Heart right ventricle (tissue), 16 donors: ENCODE measurements at regions of chr6 and their contacts with region 1.

Region 1: DNA sequence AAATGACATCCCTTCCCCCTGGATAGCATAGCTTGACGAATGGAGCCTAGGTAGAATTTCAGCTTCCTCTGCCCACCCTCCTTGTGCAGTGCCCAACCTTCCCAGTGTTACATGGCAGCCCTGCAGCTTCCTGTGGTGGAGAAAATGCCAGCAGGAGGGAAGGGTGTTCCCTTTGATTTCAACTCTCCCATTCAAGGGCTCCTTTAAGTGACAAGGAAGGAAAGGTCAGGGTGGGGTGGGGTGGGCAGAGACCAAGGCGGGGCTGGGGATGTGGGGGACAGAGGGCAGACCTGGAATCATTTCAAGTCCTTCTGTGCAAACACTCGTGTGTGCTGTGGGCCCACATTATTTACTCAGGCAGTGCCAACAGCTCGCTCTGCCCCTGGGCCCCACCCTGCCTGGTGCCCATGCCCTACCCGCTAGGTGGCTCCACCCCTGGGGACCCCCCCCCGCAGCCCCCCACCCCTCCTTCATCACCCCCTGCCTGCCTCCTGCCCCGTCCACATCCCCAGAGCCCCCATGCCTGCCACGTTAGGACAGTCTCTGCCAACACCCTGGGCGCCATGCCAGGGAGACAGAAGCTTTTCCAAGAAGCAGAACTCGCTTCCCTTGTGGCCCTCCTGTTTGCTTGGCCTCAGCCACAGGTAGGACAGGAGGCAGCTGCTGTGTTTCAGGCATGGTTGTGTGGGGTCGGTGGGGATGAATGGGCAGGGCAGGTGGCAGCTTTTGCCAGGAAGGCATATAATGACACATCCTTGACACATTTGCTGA is 9.4 kb downstream of the SPDEF start:
- DNase-seq: peak; percentile 21 to 66
- ATAC-seq: peak in 7 of 8 donors; percentile 26 to 62 (median 41)
- H3K4me3 ChIP-seq: no peak overlapping the region
- H3K27ac ChIP-seq: peak overlapping the region in 5 of 10 donors; percentile 1 to 39 (median 22)
- H3K4me1 ChIP-seq: peaks cover 0 to 19% (median 10%) of the 10 kb centered on the region in 9 donors
- H3K27me3 ChIP-seq: no peaks in the 10 kb centered on the region
- CTCF ChIP-seq: no peak

Region 2: GRCh38 chr6:34260576-34261267 is 286.0 kb before region 1 on chr6:
- intact Hi-C with region 1: no loop called
- DNase-seq: no peak
- ATAC-seq: no peak
- H3K4me3 ChIP-seq: no peak overlapping the region
- H3K27ac ChIP-seq: no peak overlapping the region
- H3K4me1 ChIP-seq: no peaks in the 10 kb centered on the region
- H3K27me3 ChIP-seq: no peaks in the 10 kb centered on the region
- CTCF ChIP-seq: no peak

Region 3: GRCh38 chr6:34595332-34596184 is 48.8 kb after region 1 on chr6:
- intact Hi-C with region 1: loop called in 2 of 10 experiments (anchors 5 kb)
- DNase-seq: no peak
- ATAC-seq: no peak
- H3K4me3 ChIP-seq: no peak overlapping the region
- H3K27ac ChIP-seq: no peak overlapping the region
- H3K4me1 ChIP-seq: peaks cover 10 to 76% (median 55%) of the 10 kb centered on the region in 9 donors
- H3K27me3 ChIP-seq: no peaks in the 10 kb centered on the region
- CTCF ChIP-seq: no peak

Region 4: GRCh38 chr6:35611240-35611639 is 1064.5 kb after region 1 on chr6:
- intact Hi-C with region 1: loop called in 1 of 10 experiments (anchors 5 kb)
- DNase-seq: no peak
- ATAC-seq: peak in 1 of 8 donors; percentile 29
- H3K4me3 ChIP-seq: no peak overlapping the region
- H3K27ac ChIP-seq: peak overlapping the region in 3 of 10 donors; percentile 0 to 47 (median 38)
- H3K4me1 ChIP-seq: peaks cover 0 to 48% (median 0%) of the 10 kb centered on the region in 9 donors
- H3K27me3 ChIP-seq: no peaks in the 10 kb centered on the region
- CTCF ChIP-seq: no peak